Heart left ventricle (tissue), 16 donors: ENCODE measurements at regions of chr12 and their contacts with region 1.

Region 1: DNA sequence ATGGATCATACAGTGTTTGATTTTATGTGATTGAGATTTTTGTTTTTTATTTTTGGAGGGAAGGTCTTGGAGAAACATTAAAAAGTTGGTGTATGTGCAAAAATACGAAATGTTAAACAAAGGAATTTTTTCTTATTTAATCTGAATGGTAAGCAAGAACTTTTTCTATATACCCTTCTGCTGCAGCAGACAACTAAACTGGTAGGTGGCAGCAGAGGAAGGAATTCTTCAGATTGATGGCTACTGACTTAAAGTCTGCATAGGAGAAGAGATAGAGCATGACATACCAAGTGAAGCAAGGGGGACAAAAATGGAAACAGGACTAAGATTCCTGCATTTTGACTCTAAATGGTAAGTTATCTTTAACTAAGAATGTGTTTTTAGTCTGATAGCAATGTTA is 42.0 kb upstream of the A2ML1 start:
- DNase-seq: no peak
- ATAC-seq: peak in 1 of 4 donors; percentile 63
- H3K4me3 ChIP-seq: no peak overlapping the region
- H3K27ac ChIP-seq: no peak overlapping the region
- H3K4me1 ChIP-seq: peaks cover 0 to 26% (median 4%) of the 10 kb centered on the region in 12 donors
- H3K27me3 ChIP-seq: no peaks in the 10 kb centered on the region
- CTCF ChIP-seq: peak in 11 of 12 donors; percentile 6 to 50 (median 38)
- POLR2A ChIP-seq: no peak

Region 2: GRCh38 chr12:8681041-8681902 is 99.1 kb before region 1 on chr12:
- intact Hi-C with region 1: loop called in 2 of 10 experiments (anchors 5 to 10 kb)
- DNase-seq: peak in 2 of 5 donors; percentile 11 to 30
- ATAC-seq: peak; percentile 62 to 91 (median 66)
- H3K4me3 ChIP-seq: peak overlapping the region in 4 of 12 donors; percentile 11 to 25 (median 16)
- H3K27ac ChIP-seq: peak overlapping the region in 11 of 12 donors; percentile 21 to 73 (median 54)
- H3K4me1 ChIP-seq: peaks cover 0 to 20% (median 0%) of the 10 kb centered on the region in 12 donors
- H3K27me3 ChIP-seq: no peaks in the 10 kb centered on the region
- CTCF ChIP-seq: no peak
- POLR2A ChIP-seq: no peak

Region 3: GRCh38 chr12:8860165-8860961 is 80.0 kb after region 1 on chr12:
- intact Hi-C with region 1: loop called in 2 of 10 experiments (anchors 5 to 10 kb)
- DNase-seq: peak in 2 of 5 donors; percentile 29 to 34
- ATAC-seq: peak; percentile 32 to 79 (median 68)
- H3K4me3 ChIP-seq: no peak overlapping the region
- H3K27ac ChIP-seq: no peak overlapping the region
- H3K4me1 ChIP-seq: no peaks in the 10 kb centered on the region
- H3K27me3 ChIP-seq: no peaks in the 10 kb centered on the region
- CTCF ChIP-seq: peak; percentile 40 to 72 (median 61)
- POLR2A ChIP-seq: no peak